ENCODE measurements at regions of chr12 and their contacts with region 1.

Region 1: GRCh38 chr12:45257185-45257930 is 41.5 kb downstream of the ANO6 start:
- DNase-seq: no peak
- H3K4me3 ChIP-seq: no peak overlapping the region
- H3K27ac ChIP-seq: peak overlapping the region; percentile 92; the same call in 1 of the 2 replicates
- H3K4me1 ChIP-seq: peaks cover 63% of the 10 kb centered on the region
- H3K27me3 ChIP-seq: no peaks in the 10 kb centered on the region
- CTCF ChIP-seq: no peak

Region 2: GRCh38 chr12:45324391-45324790 is 67.0 kb after region 1 on chr12:
- CTCF ChIA-PET with region 1: no interaction called
- POLR2A ChIA-PET with region 1: no interaction called
- intact Hi-C with region 1: no loop called
- DNase-seq: no peak
- H3K4me3 ChIP-seq: no peak overlapping the region
- H3K27ac ChIP-seq: no peak overlapping the region
- H3K4me1 ChIP-seq: no peaks in the 10 kb centered on the region
- H3K27me3 ChIP-seq: no peaks in the 10 kb centered on the region
- CTCF ChIP-seq: no peak

Region 3: DNA sequence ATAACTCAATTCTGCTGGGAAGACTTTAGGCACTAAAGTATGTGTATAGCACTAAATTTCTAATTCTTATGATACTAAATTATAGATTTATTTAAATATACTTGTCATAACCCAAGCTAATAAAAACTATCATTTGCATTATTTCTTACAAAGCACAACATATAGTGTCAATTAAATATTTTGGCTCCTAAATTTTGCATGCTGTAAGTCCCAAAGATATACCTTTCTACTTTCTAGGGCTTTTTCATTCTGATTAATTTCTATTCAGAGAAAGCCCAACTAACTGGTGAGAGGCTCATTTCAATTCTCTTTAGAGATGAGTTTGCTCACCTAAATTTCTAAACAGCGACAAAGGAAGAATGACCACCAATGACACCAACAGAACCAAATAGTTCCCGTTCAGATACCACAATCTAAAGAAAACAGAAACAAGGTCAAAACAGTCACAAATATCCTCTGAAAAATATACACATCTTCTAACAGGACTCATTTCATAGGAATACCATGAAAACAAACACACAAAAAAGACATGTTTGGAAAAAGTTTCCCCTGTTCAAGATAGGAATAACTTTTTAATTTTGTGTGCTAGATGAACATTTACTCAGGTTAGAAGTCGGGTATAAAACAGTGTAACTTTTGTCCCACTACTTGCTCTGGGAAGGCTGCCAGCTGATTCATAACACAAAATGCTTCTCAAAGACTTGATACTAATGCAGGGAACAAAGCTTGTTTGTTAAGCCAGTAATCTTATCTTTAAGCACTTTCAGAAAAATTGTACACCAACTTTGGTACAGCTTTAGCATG is 1107.6 kb after region 1 on chr12:
- CTCF ChIA-PET with region 1: no interaction called
- POLR2A ChIA-PET with region 1: interaction called, 11 read pairs
- intact Hi-C with region 1: no loop called
- DNase-seq: peak; percentile 43 to 68
- H3K4me3 ChIP-seq: peak overlapping the region; percentile 94; the same call in 1 of the 2 replicates
- H3K27ac ChIP-seq: peak overlapping the region; percentile 97
- H3K4me1 ChIP-seq: peaks cover 68% of the 10 kb centered on the region
- H3K27me3 ChIP-seq: no peaks in the 10 kb centered on the region
- CTCF ChIP-seq: no peak

Measured in PC-9 (cell line).